Pancreas (tissue), 10 donors: ENCODE measurements at regions of chr13 and their contacts with region 1.

Region 1: GRCh38 chr13:20713751-20714150 is 10.3 kb downstream of the IL17D start:
- DNase-seq: no peak
- ATAC-seq: peak in 1 of 4 donors; percentile 20
- H3K4me3 ChIP-seq: no peak overlapping the region
- H3K27ac ChIP-seq: no peak overlapping the region
- H3K4me1 ChIP-seq: no peaks in the 10 kb centered on the region
- H3K27me3 ChIP-seq: no peaks in the 10 kb centered on the region
- CTCF ChIP-seq: no peak

Region 2: GRCh38 chr13:20495082-20496023 is 218.4 kb before region 1 on chr13:
- intact Hi-C with region 1: loop called in 1 of 3 experiments (anchors 10 kb)
- DNase-seq: peak in 3 of 6 donors; percentile 30 to 70 (median 33)
- ATAC-seq: peak; percentile 82 to 98 (median 95)
- H3K4me3 ChIP-seq: peak overlapping the region in 1 of 4 donors; percentile 25
- H3K27ac ChIP-seq: no peak overlapping the region
- H3K4me1 ChIP-seq: no peaks in the 10 kb centered on the region
- H3K27me3 ChIP-seq: no peaks in the 10 kb centered on the region
- CTCF ChIP-seq: peak; percentile 83 to 95 (median 90)

Region 3: DNA sequence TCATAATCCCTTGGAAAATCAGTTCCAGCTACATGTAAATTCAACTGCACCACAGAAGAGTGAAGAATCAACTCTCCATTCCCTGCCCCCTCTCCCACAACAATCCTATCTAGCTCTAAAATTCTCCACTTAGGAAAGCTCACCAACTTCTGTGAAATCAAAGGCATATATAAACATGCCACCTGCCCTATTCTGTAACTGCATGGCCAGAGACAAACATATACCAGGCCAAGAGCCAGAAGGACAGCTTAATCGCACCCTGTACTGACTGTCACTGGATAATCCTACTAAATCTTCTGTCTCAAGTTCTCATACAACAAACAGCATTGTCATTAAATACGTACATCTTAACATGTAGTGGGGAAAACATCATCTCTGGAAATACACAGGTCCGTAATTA is 118.2 kb after region 1 on chr13:
- intact Hi-C with region 1: loop called in 1 of 3 experiments (anchors 10 kb)
- DNase-seq: no peak
- ATAC-seq: no peak
- H3K4me3 ChIP-seq: no peak overlapping the region
- H3K27ac ChIP-seq: no peak overlapping the region
- H3K4me1 ChIP-seq: no peaks in the 10 kb centered on the region
- H3K27me3 ChIP-seq: no peaks in the 10 kb centered on the region
- CTCF ChIP-seq: no peak